Activated CD8-positive, alpha-beta memory T cell treated with anti-CD3 and anti-CD28 coated beads, Interleukin-2, amount 10 ng/mL, durations not matched to agents 7 days and 5 days (primary cell): ENCODE measurements at regions of chr4 and their contacts with region 1.

Region 1: GRCh38 chr4:6974138-6974848 is 64.7 kb downstream of the TBC1D14 start:
- DNase-seq: peak; percentile 87
- ATAC-seq: peak; percentile 92
- H3K4me3 Mint-ChIP-seq: no peak overlapping the region
- H3K27ac Mint-ChIP-seq: no peak overlapping the region
- H3K4me1 Mint-ChIP-seq: peaks cover 16% of the 10 kb centered on the region
- H3K27me3 Mint-ChIP-seq: no peaks in the 10 kb centered on the region

Region 2: GRCh38 chr4:6716018-6716911 is 258.0 kb before region 1 on chr4 and contains the start of gene BLOC1S4:
- CTCF ChIA-PET with region 1: interaction called, 10 read pairs
- DNase-seq: peak; percentile 92
- ATAC-seq: peak; percentile 90
- H3K4me3 Mint-ChIP-seq: peak within 1 kb of the TSS; percentile 88
- H3K27ac Mint-ChIP-seq: peak within 1 kb of the TSS; percentile 93
- H3K4me1 Mint-ChIP-seq: peaks cover 32% of the 10 kb centered on the region
- H3K27me3 Mint-ChIP-seq: no peaks in the 10 kb centered on the region
- total RNA-seq, gene BLOC1S4: 21.8 to 22.3 TPM

Region 3: GRCh38 chr4:6986781-6987587 is 12.7 kb after region 1 on chr4:
- CTCF ChIA-PET with region 1: interaction called, 26 read pairs
- DNase-seq: peak; percentile 95
- ATAC-seq: peak; percentile 95
- H3K4me3 Mint-ChIP-seq: peak overlapping the region; percentile 92
- H3K27ac Mint-ChIP-seq: peak overlapping the region; percentile 90
- H3K4me1 Mint-ChIP-seq: peaks cover 73% of the 10 kb centered on the region
- H3K27me3 Mint-ChIP-seq: no peaks in the 10 kb centered on the region

Region 4: DNA sequence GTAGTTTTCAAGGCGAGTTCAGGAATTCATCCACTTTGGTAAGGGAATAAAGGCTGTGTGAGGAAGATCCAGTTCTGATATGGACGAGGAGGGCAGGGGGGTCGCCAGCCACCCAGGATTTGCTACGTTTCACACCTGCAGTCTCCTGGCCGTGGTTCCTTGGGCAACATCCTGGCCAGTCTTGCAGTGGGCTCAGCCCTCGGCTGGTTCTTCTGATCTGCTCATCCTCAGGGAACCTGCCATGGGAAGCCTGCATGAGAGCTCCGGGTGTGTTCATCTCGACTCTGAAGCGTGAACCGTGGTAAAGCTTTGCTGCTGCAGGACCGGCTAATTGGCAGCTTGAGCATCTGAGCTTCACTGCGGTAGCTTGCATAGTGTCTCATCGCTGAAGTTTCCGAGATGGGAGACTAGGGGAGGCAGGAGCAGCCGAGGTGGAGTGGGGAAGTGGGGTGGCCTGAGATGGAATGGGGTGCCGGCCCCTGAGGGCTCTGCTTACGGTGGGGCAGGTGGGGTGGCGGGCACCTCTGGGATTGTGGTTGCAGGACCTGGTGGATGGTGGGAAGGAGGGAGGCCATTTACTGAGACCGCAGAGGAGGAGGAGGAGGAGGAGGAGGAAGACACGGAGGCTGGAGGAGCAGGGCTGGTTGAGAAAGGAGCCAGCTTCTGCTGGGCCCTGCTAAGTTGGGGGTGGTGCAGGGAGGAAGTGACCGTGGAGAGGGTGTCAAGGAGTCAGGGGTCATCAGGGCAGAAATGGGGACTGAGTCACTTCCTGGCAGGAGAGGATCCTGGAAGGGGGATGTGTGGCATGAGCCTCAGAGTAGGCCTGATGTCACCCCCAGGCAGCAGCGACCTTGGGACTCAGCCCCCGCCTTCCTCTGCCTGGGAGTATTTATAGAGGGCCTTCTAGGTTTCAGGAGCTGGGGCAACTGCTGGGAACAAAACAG is 673.6 kb after region 1 on chr4:
- CTCF ChIA-PET with region 1: no interaction called
- DNase-seq: no peak
- ATAC-seq: no peak
- H3K4me3 Mint-ChIP-seq: no peak overlapping the region
- H3K27ac Mint-ChIP-seq: peak overlapping the region; percentile 90
- H3K4me1 Mint-ChIP-seq: peaks cover 72% of the 10 kb centered on the region
- H3K27me3 Mint-ChIP-seq: peaks cover 2% of the 10 kb centered on the region